Activated CD4-positive, alpha-beta memory T cell treated with anti-CD3 and anti-CD28 coated beads for 36 hours (primary cell): ENCODE measurements at regions of chr4 and their contacts with region 1.

Region 1: DNA sequence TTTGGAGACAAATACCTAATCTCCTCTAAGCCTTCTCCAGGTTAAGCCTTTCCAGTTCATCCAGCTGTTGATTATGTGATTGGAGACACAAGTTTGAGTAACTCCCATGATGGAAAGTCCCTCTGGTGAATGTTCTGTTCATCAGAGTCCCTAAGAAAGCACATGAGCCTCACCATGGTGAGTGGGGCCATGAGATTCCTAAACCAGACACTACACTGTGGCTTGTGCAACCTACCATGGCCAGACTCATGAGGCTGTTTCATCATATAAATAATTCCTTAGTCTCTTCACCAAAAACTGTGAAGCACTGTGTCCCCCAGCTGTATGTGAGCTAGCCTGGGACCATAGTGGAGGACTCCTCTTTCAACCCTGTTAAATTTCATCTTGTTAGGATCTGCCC is 14.4 kb downstream of the PKD2 start:
- DNase-seq: no peak
- H3K4me3 Mint-ChIP-seq: no peak overlapping the region
- H3K27ac Mint-ChIP-seq: no peak overlapping the region
- H3K4me1 Mint-ChIP-seq: no peaks in the 10 kb centered on the region
- H3K27me3 Mint-ChIP-seq: no peaks in the 10 kb centered on the region

Region 2: GRCh38 chr4:88033309-88033708 is 11.5 kb after region 1 on chr4:
- CTCF ChIA-PET with region 1: interaction called, 25 read pairs
- POLR2A ChIA-PET with region 1: no interaction called
- intact Hi-C with region 1: no loop called
- DNase-seq: peak; percentile 26
- H3K4me3 Mint-ChIP-seq: no peak overlapping the region
- H3K27ac Mint-ChIP-seq: no peak overlapping the region
- H3K4me1 Mint-ChIP-seq: peaks cover 4% of the 10 kb centered on the region
- H3K27me3 Mint-ChIP-seq: no peaks in the 10 kb centered on the region